ENCODE measurements at regions of chr16 and their contacts with region 1.

Region 1: GRCh38 chr16:30091474-30092372 is at the start of gene TBX6:
- DNase-seq: peak; percentile 95
- H3K4me3 ChIP-seq: peak within 1 kb of the TSS; percentile 58 to 61
- H3K27ac ChIP-seq: peak within 1 kb of the TSS; percentile 50 to 89; a peak in 3 of 4 replicates
- H3K4me1 ChIP-seq: peaks cover 5 to 34% of the 10 kb centered on the region in 2 experiments; a peak in 2 of 4 replicates
- H3K27me3 ChIP-seq: no peaks in the 10 kb centered on the region
- CTCF ChIP-seq: peak; percentile 58
- EP300 ChIP-seq: no peak; a peak in 1 of 4 replicates
- RAD21 ChIP-seq: peak; percentile 78
- polyA plus RNA-seq, gene TBX6: 0.16 and 0.18 TPM in 2 replicates

Region 2: GRCh38 chr16:29720699-29721098 is 371.0 kb before region 1 on chr16:
- CTCF ChIA-PET with region 1: no interaction called
- POLR2A ChIA-PET with region 1: no interaction called
- DNase-seq: no peak
- H3K4me3 ChIP-seq: no peak overlapping the region
- H3K27ac ChIP-seq: no peak overlapping the region
- H3K4me1 ChIP-seq: no peaks in the 10 kb centered on the region
- H3K27me3 ChIP-seq: no peaks in the 10 kb centered on the region
- CTCF ChIP-seq: no peak
- EP300 ChIP-seq: no peak
- RAD21 ChIP-seq: no peak

Region 3: DNA sequence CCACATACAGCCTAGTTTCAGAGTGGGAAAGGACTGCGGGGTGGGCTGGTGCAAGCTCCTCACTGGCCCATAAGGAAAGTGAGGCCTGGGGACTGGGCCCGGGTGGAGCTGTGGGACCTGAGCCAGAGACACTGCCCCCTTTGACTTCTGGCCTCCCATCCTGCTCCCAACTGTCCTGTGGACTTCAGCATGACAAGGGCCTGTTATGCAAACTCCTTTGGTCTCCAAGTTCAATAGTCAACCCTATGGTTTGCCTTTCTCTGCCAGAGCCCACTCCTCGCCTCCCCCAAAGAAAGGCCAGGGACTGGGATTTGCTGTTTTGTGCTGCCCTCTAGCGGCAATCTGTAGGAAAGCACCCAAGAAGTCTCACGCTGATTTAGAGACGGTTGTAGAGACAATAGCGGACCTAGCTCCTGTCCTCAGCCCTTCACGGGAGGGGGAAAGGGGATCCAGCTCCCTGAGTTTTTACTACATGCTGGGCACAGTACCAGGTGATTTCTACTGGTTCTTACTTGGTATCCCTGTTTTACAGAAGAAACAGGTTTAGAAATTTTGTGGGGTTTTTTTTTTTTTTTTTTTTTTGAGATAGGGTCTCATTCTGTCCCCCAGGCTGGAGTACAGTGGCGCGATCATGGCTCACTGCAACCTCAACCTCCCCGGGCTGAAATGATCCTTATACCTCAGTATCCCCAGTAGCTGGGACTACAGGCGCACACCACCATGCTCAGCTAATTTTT is 59.5 kb before region 1 on chr16:
- CTCF ChIA-PET with region 1: interaction called, 22 read pairs
- POLR2A ChIA-PET with region 1: no interaction called
- DNase-seq: peak; percentile 83
- H3K4me3 ChIP-seq: no peak overlapping the region; a peak in 1 of 4 replicates
- H3K27ac ChIP-seq: peak overlapping the region in 1 of 2 experiments; percentile 83; a peak in 1 of 4 replicates
- H3K4me1 ChIP-seq: peaks cover 6 to 28% of the 10 kb centered on the region in 2 experiments; a peak in 2 of 4 replicates
- H3K27me3 ChIP-seq: no peaks in the 10 kb centered on the region
- CTCF ChIP-seq: peak; percentile 90
- EP300 ChIP-seq: no peak
- RAD21 ChIP-seq: peak; percentile 92

Region 4: GRCh38 chr16:30052671-30053372 is 38.9 kb before region 1 on chr16:
- CTCF ChIA-PET with region 1: interaction called, 20 read pairs
- POLR2A ChIA-PET with region 1: interaction called, 7 read pairs
- DNase-seq: peak; percentile 97
- H3K4me3 ChIP-seq: peak overlapping the region; percentile 68 to 97
- H3K27ac ChIP-seq: peak overlapping the region; percentile 58 to 70; a peak in 3 of 4 replicates
- H3K4me1 ChIP-seq: peaks cover 5% of the 10 kb centered on the region in 2 experiments; a peak in 2 of 4 replicates
- H3K27me3 ChIP-seq: no peaks in the 10 kb centered on the region
- CTCF ChIP-seq: no peak
- EP300 ChIP-seq: peak; percentile 26 to 33; a peak in 2 of 4 replicates
- RAD21 ChIP-seq: no peak

Region 5: DNA sequence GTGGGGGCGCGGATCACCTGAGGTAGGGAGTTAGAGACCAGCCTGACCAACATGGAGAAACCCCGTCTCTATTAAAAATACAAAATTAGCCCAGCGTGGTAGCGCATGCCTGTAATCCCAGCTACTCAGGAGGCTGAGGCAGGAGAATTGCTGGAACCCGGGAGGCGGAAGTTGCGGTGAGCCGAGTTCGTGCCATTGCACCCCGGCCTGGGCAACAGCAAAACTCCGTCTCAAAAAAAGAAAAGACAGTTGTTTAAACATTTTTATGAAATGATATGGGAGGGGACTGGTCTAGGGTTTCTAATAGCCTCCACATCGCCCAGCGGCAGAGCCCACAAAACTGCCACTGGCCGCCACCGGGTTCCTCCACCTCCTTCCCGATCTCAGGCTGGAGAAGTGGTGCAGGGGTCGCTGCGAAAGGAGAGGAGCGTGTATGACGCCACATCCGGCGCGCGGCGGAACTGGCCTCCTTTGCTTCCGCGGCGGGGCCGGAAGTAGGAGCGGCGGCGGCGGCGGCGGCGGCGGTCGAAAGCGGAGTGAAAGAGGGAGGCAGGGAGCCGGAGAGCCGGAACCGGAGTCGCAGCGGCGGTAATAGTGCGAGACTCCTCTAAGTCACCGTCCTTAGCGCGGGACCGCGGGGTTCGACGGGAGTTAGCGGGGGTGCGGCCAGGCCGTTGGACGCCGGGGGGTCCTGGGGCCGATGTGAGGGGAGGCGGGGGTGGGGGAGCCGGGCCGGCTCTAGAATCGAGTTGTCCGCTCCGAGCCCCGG is 16.0 kb before region 1 on chr16 and contains the start of gene PPP4C:
- CTCF ChIA-PET with region 1: interaction called, 49 read pairs
- POLR2A ChIA-PET with region 1: interaction called, 10 read pairs
- DNase-seq: peak; percentile 97
- H3K4me3 ChIP-seq: peak within 1 kb of the TSS; percentile 76 to 78
- H3K27ac ChIP-seq: peak within 1 kb of the TSS; percentile 47 to 90
- H3K4me1 ChIP-seq: peaks cover 5 to 18% of the 10 kb centered on the region in 2 experiments; a peak in 3 of 4 replicates
- H3K27me3 ChIP-seq: no peaks in the 10 kb centered on the region
- CTCF ChIP-seq: no peak; the same call in 1 of the 2 replicates
- EP300 ChIP-seq: peak in 1 of 2 experiments; percentile 53; a peak in 1 of 4 replicates
- RAD21 ChIP-seq: no peak
- polyA plus RNA-seq, gene PPP4C: 325 and 339 TPM in 2 replicates

Region 6: DNA sequence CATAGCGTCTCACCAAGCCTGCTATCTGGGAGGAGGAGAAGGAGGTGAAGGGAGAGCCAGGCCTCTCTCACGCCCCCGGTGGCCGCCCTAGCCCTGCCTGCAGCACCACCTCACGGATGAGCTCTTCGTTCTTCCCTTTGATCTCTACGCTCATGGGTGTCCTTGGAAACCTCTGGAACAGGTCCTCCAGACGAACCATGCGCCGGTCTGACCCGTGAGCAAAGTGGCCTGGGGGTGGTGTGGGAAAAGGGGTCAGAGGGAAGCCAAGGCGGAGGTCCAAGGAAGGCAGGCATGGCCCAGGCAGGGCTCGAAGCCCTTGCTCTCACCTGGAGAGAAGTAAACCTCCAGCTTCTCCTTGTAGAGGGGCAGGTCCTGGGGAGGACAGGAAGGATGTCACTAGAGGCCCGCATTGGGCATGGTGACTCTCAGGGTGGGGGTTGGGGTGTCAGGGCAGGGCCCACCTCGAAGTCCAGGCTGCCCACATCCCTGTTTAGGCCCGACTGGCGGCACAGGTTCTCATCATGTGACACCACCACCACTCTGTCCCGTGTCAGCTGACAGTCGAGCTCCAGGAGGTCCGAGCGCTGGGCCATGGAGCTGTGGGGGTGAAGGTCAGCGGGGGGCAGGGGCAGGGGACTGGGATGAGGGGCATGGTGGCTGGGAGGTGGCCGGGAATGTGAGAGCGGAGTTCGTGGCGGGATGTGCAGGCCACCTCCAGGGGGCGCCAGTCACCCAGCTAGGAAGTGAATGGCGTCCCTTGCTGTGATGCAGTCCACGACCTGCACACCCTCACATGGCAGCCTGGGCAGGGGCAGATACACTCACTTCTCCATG is 20.7 kb after region 1 on chr16:
- CTCF ChIA-PET with region 1: interaction called, 49 read pairs
- POLR2A ChIA-PET with region 1: no interaction called
- DNase-seq: peak; percentile 87
- H3K4me3 ChIP-seq: no peak overlapping the region
- H3K27ac ChIP-seq: no peak overlapping the region
- H3K4me1 ChIP-seq: peaks cover 5 to 6% of the 10 kb centered on the region in 2 experiments; a peak in 1 of 4 replicates
- H3K27me3 ChIP-seq: no peaks in the 10 kb centered on the region
- CTCF ChIP-seq: peak; percentile 65
- EP300 ChIP-seq: no peak
- RAD21 ChIP-seq: peak; percentile 75

Region 7: DNA sequence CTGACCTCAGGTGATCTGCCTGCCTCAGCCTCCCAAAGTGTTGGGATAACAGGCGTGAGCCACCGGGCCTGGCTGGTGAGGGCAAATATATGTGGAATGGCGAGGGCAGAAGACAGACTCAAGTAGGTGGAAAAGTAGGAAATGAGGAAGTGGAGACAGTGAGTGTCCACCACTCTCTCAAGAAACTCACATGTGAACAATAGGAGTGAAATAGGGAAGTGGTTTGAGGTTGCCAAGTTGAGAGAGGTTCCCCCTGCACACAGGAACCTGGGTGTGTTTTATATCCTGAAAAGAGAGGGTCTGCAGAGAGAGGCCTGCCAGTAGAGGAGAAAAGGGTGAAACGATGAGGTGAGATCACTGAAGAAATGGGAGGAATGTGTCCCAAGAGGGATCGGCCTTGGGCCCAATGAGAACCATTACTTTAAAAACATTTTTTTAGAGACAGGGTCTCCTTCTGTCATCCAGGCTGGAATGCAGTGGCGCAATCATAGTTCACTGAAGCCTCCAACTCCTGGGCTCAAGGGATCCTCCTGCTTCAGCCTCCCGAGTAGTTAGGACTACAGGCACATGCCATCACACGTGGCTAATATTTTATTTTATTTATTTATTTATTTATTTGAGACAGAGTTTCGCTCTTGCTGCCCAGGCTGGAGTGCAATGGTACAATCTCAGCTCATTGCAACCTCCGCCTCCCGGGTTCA is 74.6 kb after region 1 on chr16:
- CTCF ChIA-PET with region 1: interaction called, 16 read pairs
- POLR2A ChIA-PET with region 1: no interaction called
- DNase-seq: no peak
- H3K4me3 ChIP-seq: no peak overlapping the region
- H3K27ac ChIP-seq: no peak overlapping the region
- H3K4me1 ChIP-seq: no peaks in the 10 kb centered on the region
- H3K27me3 ChIP-seq: no peaks in the 10 kb centered on the region
- CTCF ChIP-seq: no peak
- EP300 ChIP-seq: no peak
- RAD21 ChIP-seq: no peak

Region 8: DNA sequence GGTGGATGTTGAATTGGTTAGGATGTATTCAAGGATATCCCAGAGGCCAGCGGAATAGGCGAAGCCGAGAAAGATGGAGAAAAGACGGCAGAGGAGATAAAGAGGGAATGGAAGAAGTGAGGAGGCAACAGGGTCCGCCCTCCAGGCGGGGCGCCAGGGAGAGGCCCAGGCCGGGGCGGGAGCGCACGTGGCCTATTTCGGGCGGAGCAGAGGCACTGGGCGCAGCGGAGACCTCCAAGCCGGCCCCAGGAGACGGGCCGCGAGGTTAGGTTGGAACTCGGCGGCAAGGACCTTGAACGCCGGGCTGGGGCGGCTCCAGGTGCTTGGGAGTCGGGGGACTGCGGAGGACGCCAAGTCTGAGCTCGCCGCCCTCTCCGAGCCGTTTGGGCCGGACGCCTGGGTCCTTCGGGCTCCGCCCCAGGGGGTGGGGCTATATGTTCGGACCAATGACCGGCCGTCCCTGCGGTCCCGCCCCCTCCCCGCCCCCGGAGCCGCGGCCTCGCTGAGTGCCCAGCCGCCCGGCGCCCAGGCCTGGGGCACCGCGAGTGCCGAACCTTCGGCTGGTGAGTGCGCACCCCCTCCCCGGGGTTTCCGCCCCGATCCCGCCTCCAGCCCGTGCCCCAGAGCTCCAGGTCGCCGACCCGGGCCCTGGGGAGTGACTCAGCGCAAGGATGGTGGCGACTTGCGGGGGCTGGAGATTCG is 315.5 kb after region 1 on chr16 and contains the start of gene ZNF771:
- CTCF ChIA-PET with region 1: interaction called, 10 read pairs
- POLR2A ChIA-PET with region 1: no interaction called
- DNase-seq: peak; percentile 96
- H3K4me3 ChIP-seq: peak within 1 kb of the TSS; percentile 69 to 99
- H3K27ac ChIP-seq: peak within 1 kb of the TSS; percentile 73 to 74
- H3K4me1 ChIP-seq: peaks cover 8 to 15% of the 10 kb centered on the region in 2 experiments; a peak in 2 of 4 replicates
- H3K27me3 ChIP-seq: no peaks in the 10 kb centered on the region
- CTCF ChIP-seq: no peak
- EP300 ChIP-seq: no peak; a peak in 1 of 4 replicates
- RAD21 ChIP-seq: no peak
- polyA plus RNA-seq, gene ZNF771: 20.4 and 21.7 TPM in 2 replicates

Measured in SK-N-SH (cell line).